PC-3 (cell line): ENCODE measurements at regions of chr3 and their contacts with region 1.

Region 1: DNA sequence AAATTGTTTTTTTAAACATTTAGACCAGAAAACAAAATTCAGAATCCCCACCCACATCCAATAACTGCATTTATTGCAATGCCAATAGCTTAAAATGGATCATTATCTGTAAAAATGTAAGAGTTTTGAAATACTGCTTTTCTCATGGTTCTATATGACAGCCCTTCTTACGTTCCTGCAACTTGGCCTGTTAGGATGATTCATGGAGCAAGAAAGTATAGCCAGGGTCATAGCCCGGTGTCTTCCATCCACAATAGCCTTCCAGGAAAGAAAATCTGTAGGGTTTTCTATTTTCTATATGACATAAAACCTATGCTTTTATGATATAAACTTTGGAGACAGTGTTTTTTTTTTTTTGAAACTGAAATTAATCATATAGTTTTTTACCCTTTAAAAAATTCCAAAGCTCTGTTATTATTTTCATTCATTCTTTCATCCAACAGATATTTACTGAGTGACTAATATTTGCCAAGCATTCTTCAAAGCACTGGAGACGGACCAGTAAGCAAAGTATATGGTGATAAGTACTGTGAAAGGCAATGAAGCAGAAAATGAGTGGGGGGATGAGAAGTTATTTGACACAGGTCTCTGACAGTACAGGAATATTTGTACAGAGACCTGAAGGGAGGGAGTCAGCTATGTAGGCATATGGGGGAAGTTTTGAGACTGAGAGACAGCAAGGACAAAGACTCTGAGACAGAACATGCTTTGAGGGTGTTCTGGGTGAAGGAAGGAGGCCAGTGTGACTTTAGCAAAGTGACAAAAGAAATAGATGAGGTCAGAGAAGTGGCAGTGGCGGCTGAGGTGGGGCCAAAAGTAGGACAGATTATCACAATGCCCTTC is 29.0 kb upstream of the SLC2A2 start:
- DNase-seq: peak; percentile 94
- ATAC-seq: peak; percentile 78
- H3K4me3 ChIP-seq: peak overlapping the region; percentile 18; the same call in 1 of the 2 replicates
- H3K27ac ChIP-seq: peak overlapping the region; percentile 88
- H3K4me1 ChIP-seq: peaks cover 31% of the 10 kb centered on the region
- H3K27me3 ChIP-seq: no peaks in the 10 kb centered on the region
- CTCF ChIP-seq: no peak

Region 2: GRCh38 chr3:171095063-171095462 is 39.5 kb after region 1 on chr3:
- CTCF ChIA-PET with region 1: no interaction called
- POLR2A ChIA-PET with region 1: no interaction called
- intact Hi-C with region 1: no loop called
- DNase-seq: no peak
- ATAC-seq: no peak
- H3K4me3 ChIP-seq: no peak overlapping the region
- H3K27ac ChIP-seq: no peak overlapping the region
- H3K4me1 ChIP-seq: peaks cover 1% of the 10 kb centered on the region; the same call in 1 of the 2 replicates
- H3K27me3 ChIP-seq: no peaks in the 10 kb centered on the region
- CTCF ChIP-seq: no peak

Region 3: DNA sequence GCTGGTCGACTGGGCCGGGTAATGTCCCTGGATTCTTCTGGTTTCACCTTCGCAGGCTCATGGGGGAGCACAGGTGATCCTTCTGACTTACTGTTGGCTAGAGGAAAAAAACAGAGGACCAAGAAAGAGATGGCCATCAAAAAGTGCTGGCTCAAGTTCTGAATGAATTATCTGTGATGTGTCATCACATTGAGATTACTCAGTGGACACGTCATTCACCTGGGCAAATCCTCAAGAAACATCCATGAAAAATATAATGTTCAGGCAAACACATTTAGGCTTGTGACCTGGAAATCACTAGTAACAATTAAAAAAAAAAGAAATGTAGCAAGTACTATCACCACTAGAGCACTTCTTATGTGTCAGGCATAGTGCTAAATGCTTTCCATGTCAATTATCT is 52.5 kb after region 1 on chr3:
- CTCF ChIA-PET with region 1: no interaction called
- POLR2A ChIA-PET with region 1: interaction called, 3 read pairs
- intact Hi-C with region 1: loop called (anchors 5 kb)
- DNase-seq: peak; percentile 94
- ATAC-seq: peak; percentile 91
- H3K4me3 ChIP-seq: no peak overlapping the region
- H3K27ac ChIP-seq: peak overlapping the region; percentile 28
- H3K4me1 ChIP-seq: peaks cover 20% of the 10 kb centered on the region
- H3K27me3 ChIP-seq: no peaks in the 10 kb centered on the region
- CTCF ChIP-seq: no peak

Region 4: DNA sequence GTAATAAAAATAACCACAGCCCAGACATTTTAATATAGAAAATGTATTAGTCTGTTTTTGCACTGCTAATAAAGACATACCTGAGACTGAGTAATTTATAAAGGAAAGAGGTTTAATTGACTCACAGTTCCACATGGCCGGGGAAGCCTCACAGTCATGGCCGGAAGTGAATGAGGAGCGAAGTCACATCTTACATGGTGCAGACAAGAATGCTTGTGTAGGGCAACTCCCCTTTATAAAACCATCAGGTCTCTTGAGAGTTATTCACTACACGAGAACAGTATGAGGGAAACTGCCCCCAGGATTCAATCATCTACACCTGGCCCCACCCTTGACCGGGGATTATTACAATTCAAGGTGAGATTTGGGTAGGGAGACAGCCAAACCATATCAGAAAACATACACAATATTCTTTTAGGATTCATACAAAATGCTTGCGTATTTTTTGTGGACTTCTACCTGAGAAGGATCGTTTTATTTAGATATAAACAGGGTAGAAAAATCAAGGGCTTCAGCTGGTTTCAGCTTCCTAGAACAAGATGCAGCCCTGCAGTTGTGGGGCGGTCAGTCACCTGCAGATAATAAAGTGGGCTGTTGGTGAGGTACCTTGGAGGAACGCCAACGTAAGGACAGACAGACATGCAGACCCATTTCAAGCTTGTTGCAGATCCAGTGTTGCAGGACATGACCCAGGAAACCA is 302.8 kb after region 1 on chr3:
- CTCF ChIA-PET with region 1: no interaction called
- POLR2A ChIA-PET with region 1: no interaction called
- intact Hi-C with region 1: loop called (anchors 5 kb)
- DNase-seq: peak; percentile 65
- ATAC-seq: peak; percentile 8; the same call in 1 of the 2 replicates
- H3K4me3 ChIP-seq: no peak overlapping the region
- H3K27ac ChIP-seq: peak overlapping the region; percentile 88
- H3K4me1 ChIP-seq: peaks cover 53% of the 10 kb centered on the region
- H3K27me3 ChIP-seq: no peaks in the 10 kb centered on the region
- CTCF ChIP-seq: no peak